ENCODE measurements at regions of chr11 and their contacts with region 1.

Region 1: DNA sequence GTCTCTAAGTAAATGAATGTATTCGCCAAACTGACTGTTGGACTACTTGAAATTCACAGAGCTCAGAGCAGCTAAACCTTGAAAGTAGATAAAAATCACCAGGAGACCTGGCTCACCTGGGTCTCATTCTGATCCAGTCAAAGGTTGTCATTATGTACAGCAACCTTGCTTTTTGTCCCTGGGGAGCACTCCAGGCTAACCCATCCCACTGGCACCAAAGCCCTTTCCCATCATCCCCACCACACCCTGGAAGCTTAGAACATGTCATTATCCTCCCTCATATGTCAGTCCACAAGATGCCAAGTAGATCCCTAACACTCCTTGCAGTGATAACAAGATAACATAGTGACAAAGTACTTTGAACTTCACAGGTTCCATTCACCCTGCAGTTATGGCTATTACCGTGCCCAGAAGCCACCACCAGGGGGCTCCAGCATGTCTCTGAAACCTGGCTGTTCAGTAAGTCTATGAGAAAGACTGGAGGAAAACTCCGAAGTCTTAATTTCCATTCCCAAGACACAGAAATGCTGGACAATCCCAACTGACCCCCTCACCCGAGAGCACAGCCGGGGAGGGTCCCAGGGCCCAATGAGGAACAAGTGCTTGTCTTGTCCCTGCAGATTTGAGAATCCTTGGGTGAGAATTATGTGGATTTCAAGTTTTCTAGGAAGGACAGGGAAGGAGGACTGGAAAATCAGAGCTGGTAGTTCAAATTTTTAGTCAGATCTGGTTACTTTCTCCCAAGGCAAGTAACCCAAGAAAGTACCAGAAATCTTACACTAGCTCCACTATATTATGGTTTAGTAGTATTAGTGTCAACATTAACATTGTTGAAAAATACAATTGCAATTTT is 43.0 kb upstream of the USP47 start:
- DNase-seq: peak; percentile 72 to 89
- ATAC-seq: peak; percentile 85 to 96 (median 94)
- H3K4me3 ChIP-seq: no peak overlapping the region
- H3K4me3 Mint-ChIP-seq: no peak overlapping the region
- H3K27ac ChIP-seq: no peak overlapping the region
- H3K27ac Mint-ChIP-seq: no peak overlapping the region
- H3K4me1 ChIP-seq: peaks cover 3% of the 10 kb centered on the region
- H3K4me1 Mint-ChIP-seq: no peaks in the 10 kb centered on the region
- H3K27me3 ChIP-seq: peaks cover 5% of the 10 kb centered on the region
- H3K27me3 Mint-ChIP-seq: peaks cover 22 to 36% of the 10 kb centered on the region in 2 donors
- CTCF ChIP-seq: peak; percentile 97

Region 2: GRCh38 chr11:11841723-11842420 is 43.1 kb after region 1 on chr11 and contains the start of gene USP47:
- intact Hi-C with region 1: loop called (anchors 2 kb)
- DNase-seq: peak; percentile 94 to 97
- ATAC-seq: peak; percentile 76 to 91 (median 85)
- H3K4me3 ChIP-seq: peak within 1 kb of the TSS; percentile 98
- H3K4me3 Mint-ChIP-seq: no peak within 1 kb of the TSS
- H3K27ac ChIP-seq: peak within 1 kb of the TSS; percentile 99
- H3K27ac Mint-ChIP-seq: no peak within 1 kb of the TSS
- H3K4me1 ChIP-seq: peaks cover 15% of the 10 kb centered on the region
- H3K4me1 Mint-ChIP-seq: peaks cover 0 to 11% of the 10 kb centered on the region in 2 donors
- H3K27me3 ChIP-seq: no peaks in the 10 kb centered on the region
- H3K27me3 Mint-ChIP-seq: peaks cover 3 to 8% of the 10 kb centered on the region in 2 donors
- CTCF ChIP-seq: peak; percentile 48
- total RNA-seq, gene USP47: 102 to 108 (median 107) TPM

Region 3: GRCh38 chr11:11848891-11849746 is 50.3 kb after region 1 on chr11:
- intact Hi-C with region 1: loop called (anchors 1 kb)
- DNase-seq: peak; percentile 40 to 88
- ATAC-seq: peak; percentile 93 to 95 (median 95)
- H3K4me3 ChIP-seq: no peak overlapping the region
- H3K4me3 Mint-ChIP-seq: peak overlapping the region; percentile 10
- H3K27ac ChIP-seq: no peak overlapping the region
- H3K27ac Mint-ChIP-seq: peak overlapping the region; percentile 67 to 69
- H3K4me1 ChIP-seq: peaks cover 17% of the 10 kb centered on the region
- H3K4me1 Mint-ChIP-seq: peaks cover 45 to 59% of the 10 kb centered on the region in 2 donors
- H3K27me3 ChIP-seq: no peaks in the 10 kb centered on the region
- H3K27me3 Mint-ChIP-seq: no peaks in the 10 kb centered on the region
- CTCF ChIP-seq: peak; percentile 71

Region 4: DNA sequence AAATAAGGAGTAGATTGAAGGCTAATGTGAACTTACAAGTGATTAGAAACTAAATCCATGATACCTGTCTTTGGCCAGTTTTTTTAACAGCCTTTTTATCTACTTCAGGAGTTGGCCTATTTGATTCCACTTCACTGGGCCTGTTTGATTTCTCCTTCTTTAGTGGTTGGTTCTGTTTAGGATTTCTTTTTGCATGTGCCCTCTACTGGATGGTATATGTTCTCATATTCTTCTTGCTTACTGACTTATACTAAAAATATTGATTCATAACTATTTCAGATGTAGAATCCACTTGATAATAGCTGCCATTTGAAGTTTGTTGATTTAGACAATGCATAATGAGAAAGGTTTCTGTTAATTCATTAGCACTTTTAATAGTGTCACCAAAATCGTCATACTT is 96.9 kb after region 1 on chr11:
- intact Hi-C with region 1: loop called (anchors 1 kb)
- DNase-seq: no peak
- ATAC-seq: no peak
- H3K4me3 ChIP-seq: no peak overlapping the region
- H3K4me3 Mint-ChIP-seq: no peak overlapping the region
- H3K27ac ChIP-seq: no peak overlapping the region
- H3K27ac Mint-ChIP-seq: peak overlapping the region in 1 of 2 donors; percentile 25
- H3K4me1 ChIP-seq: peaks cover 3% of the 10 kb centered on the region
- H3K4me1 Mint-ChIP-seq: peaks cover 2 to 28% of the 10 kb centered on the region in 2 donors
- H3K27me3 ChIP-seq: no peaks in the 10 kb centered on the region
- H3K27me3 Mint-ChIP-seq: no peaks in the 10 kb centered on the region
- CTCF ChIP-seq: peak; percentile 7

Region 5: DNA sequence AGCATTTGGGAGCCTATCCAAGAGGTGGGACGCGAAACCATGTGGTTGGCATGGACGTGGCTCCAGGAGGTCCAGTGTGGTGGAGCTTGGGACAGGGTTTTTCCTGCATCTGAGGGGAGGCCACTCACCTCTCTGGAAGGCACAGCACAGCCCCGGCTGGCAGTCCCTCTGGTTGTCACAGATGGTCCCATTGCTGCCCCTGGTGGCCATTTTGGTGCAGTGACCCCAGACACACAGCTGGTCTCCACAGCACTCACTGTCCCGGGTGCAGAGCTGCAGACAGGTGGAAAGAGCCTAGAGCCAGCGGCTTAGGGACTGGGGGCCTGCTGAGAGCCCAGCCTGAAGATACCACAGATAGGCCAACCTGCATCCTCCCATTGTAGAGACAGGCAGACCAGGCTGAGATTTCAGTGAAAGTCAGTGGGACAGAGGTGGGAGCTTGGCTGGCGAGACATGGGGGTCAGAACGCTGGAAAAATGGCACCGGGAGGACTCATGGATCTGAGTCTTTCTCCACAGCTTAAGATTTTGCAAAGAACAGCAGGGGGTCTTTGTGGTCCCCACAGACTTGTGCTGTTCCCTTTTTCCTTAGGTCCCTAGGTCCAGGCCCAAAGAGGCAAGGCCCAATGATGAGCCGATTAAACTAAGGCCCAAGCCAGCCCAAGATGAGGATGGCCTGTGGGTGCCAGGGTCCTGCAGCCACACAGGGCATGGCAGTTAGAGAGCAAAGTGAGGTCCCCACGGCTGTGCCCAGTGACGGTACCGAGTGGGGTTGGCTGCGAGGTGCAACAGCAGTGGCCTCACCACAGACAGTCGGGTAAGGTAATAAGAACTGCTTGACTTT is 168.2 kb after region 1 on chr11:
- intact Hi-C with region 1: loop called (anchors 5 kb)
- DNase-seq: peak; percentile 56 to 80
- ATAC-seq: peak; percentile 77 to 97 (median 95)
- H3K4me3 ChIP-seq: no peak overlapping the region
- H3K4me3 Mint-ChIP-seq: no peak overlapping the region
- H3K27ac ChIP-seq: no peak overlapping the region
- H3K27ac Mint-ChIP-seq: no peak overlapping the region
- H3K4me1 ChIP-seq: no peaks in the 10 kb centered on the region
- H3K4me1 Mint-ChIP-seq: peaks cover 7 to 13% of the 10 kb centered on the region in 2 donors
- H3K27me3 ChIP-seq: no peaks in the 10 kb centered on the region
- H3K27me3 Mint-ChIP-seq: peaks cover 0 to 5% of the 10 kb centered on the region in 2 donors
- CTCF ChIP-seq: peak; percentile 66

Region 6: GRCh38 chr11:12043959-12044819 is 245.4 kb after region 1 on chr11:
- intact Hi-C with region 1: loop called (anchors 1 kb)
- DNase-seq: peak; percentile 41 to 85
- ATAC-seq: peak; percentile 66 to 80 (median 70)
- H3K4me3 ChIP-seq: no peak overlapping the region
- H3K4me3 Mint-ChIP-seq: no peak overlapping the region
- H3K27ac ChIP-seq: no peak overlapping the region
- H3K27ac Mint-ChIP-seq: no peak overlapping the region
- H3K4me1 ChIP-seq: peaks cover 9% of the 10 kb centered on the region
- H3K4me1 Mint-ChIP-seq: peaks cover 4 to 7% of the 10 kb centered on the region in 2 donors
- H3K27me3 ChIP-seq: no peaks in the 10 kb centered on the region
- H3K27me3 Mint-ChIP-seq: peaks cover 8 to 17% of the 10 kb centered on the region in 2 donors
- CTCF ChIP-seq: peak; percentile 84

Region 7: GRCh38 chr11:12281571-12282478 is 483.0 kb after region 1 on chr11:
- intact Hi-C with region 1: loop called (anchors 2 kb)
- DNase-seq: peak; percentile 73 to 88
- ATAC-seq: peak; percentile 77 to 86 (median 82)
- H3K4me3 ChIP-seq: no peak overlapping the region
- H3K4me3 Mint-ChIP-seq: no peak overlapping the region
- H3K27ac ChIP-seq: no peak overlapping the region
- H3K27ac Mint-ChIP-seq: no peak overlapping the region
- H3K4me1 ChIP-seq: peaks cover 4% of the 10 kb centered on the region
- H3K4me1 Mint-ChIP-seq: no peaks in the 10 kb centered on the region
- H3K27me3 ChIP-seq: no peaks in the 10 kb centered on the region
- H3K27me3 Mint-ChIP-seq: no peaks in the 10 kb centered on the region
- CTCF ChIP-seq: peak; percentile 95